ENCODE measurements at regions of chr19 and their contacts with region 1.

Region 1: DNA sequence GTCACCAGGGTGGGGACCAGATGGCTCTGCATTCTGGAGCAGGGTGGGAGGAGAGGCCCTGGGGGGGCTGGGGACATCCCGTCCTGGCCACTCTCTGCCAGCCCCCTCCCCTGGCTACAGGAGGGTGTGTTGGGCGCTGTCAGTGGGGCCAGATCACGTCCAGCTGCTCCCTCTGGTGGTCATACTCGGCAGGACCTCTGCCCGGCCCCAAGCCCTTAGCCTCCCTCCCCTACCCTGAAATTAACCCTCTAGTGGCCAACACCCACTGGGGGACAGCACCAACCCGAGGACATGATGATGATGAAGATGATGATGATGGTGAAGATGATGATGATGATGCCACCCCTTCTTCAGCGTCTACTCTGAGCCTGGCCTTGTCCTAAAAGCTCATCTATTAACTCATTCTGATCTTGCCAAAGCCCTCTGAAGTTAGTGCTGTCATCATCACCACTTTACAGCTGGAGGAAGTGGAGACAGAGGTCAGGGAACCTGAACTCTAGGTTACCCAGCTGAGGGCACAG is 590 bp upstream of the LGI4 start:
- DNase-seq: peak; percentile 77
- H3K4me3 Mint-ChIP-seq: no peak overlapping the region
- H3K27ac Mint-ChIP-seq: no peak overlapping the region
- H3K4me1 Mint-ChIP-seq: peaks cover 4% of the 10 kb centered on the region
- H3K27me3 Mint-ChIP-seq: peaks cover 27% of the 10 kb centered on the region

Region 2: DNA sequence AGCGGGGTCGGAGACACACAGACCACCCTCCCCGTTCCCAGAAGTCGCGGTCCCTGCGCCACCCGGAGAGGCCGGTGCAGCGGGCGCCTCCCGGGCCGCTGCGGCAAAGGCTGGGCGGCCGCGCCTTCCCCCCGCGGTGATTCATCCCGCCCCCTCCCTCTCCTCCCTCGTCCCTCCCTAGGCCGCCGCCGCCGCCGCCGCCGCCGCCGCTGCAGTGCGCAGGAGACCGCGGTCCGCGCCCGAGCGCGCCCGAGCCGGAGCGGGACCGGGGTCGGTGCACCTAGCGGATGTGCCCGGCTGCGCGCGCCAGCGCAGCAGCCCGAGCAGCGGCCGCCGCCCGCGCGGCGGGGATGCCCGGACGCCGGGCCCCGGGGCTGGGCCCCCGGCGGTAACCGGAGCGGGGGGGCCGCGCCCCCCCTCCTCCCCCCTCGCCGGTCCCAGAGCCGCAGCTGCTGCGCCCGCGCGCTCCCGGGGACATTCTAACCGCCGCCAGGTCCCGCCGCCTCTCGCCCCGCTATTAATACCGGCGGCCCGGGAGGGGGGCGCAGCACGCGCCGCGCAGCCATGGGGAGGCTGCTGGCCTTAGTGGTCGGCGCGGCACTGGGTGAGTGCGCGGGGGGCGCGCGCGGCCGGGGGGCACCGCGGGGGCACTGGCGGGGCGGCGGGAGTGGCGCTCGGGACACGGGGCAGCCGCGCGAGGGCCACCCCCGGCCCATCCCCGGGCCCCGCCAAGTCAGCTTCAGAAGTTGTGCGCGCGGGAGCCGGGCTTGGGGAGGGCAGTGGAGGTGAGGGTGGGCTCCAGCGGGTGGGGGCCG is 105.0 kb before region 1 on chr19 and contains the start of gene SCN1B:
- CTCF ChIA-PET with region 1: no interaction called
- DNase-seq: peak; percentile 71
- H3K4me3 Mint-ChIP-seq: peak within 1 kb of the TSS; percentile 66
- H3K27ac Mint-ChIP-seq: peak within 1 kb of the TSS; percentile 13
- H3K4me1 Mint-ChIP-seq: peaks cover 9% of the 10 kb centered on the region
- H3K27me3 Mint-ChIP-seq: peaks cover 56% of the 10 kb centered on the region

Region 3: DNA sequence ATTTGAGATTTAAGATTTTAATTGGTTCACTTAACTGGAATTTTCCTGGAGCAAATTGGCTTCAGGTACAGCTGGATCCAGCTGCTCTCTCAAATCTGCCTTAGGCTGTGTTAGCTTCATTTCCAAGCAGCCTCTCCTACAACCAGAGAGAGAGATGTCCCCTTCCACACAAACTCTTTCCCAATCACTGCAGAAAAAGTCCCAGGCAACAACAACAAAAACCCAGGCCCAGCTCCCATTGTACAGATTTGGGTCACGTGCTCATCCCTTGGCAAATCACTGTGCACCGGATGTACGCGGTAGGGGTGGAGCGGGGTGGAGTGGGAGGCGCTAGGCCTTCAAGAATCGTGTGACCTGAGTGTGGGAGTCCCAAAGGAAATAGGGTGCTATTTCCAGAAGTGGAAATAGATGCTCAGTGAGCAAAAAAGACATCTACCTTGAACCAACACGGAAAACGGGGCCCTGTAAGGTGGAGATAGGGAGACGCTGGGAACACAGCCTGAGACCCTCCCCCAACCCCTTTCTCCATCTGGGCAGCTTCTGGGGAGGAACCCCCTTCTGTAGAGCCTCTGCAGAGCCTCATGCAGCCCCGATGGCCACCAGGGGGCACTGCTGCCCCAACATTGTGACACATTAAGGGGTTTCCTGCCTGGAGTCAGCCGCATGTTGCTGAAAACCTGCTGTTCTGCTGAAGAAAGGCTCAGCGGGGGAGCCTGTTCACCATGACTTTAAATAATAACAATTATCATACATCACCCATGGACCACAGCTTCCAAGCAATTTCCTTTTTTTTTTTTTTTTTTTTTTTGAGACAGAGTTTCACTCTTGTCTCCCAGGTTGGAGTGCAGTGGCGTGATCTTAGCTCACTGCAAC is 68.5 kb before region 1 on chr19:
- CTCF ChIA-PET with region 1: interaction called, 39 read pairs
- DNase-seq: peak; percentile 92
- H3K4me3 Mint-ChIP-seq: no peak overlapping the region
- H3K27ac Mint-ChIP-seq: no peak overlapping the region
- H3K4me1 Mint-ChIP-seq: peaks cover 10% of the 10 kb centered on the region
- H3K27me3 Mint-ChIP-seq: peaks cover 9% of the 10 kb centered on the region

Region 4: DNA sequence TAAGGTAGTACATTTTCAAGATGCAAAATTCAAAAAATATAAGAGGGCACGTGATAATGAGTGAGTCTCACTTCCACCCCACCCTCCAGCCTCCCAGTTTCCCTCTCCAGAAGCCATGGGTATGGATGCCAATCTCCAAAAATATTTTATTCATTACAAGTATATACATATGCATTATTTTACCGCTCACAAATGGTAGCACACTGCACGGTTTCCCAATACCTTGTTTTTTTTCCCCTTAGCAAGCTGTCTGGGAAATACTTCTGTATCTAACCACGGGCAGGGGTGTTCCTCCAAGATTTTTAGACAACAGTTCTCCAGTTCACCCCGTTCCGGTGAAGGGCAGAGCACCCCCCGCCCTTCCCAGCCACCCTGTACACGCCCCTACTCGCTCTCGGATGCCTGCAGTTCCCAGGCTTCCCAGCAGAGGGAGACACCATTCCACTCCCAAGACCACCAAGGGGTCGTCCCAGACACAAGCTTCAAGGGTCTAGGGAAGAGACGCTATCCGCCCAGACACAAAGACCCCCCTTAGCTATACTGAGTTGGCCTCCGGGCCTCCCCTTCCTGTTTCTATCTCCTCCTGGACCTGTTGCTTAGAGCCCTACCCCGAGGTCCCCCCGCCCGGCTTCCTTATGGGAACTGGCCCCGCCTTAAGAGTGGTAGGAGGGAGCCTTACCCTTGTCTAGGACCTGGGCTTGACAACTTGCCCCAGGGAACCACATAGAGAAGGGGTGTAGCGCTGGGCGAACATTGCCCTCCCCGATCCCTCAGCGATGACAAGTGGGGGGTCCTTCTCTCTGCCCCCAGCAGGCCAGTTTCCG is 20.9 kb before region 1 on chr19:
- CTCF ChIA-PET with region 1: interaction called, 24 read pairs
- DNase-seq: peak; percentile 77
- H3K4me3 Mint-ChIP-seq: no peak overlapping the region
- H3K27ac Mint-ChIP-seq: peak overlapping the region; percentile 24
- H3K4me1 Mint-ChIP-seq: peaks cover 9% of the 10 kb centered on the region
- H3K27me3 Mint-ChIP-seq: peaks cover 31% of the 10 kb centered on the region

Region 5: DNA sequence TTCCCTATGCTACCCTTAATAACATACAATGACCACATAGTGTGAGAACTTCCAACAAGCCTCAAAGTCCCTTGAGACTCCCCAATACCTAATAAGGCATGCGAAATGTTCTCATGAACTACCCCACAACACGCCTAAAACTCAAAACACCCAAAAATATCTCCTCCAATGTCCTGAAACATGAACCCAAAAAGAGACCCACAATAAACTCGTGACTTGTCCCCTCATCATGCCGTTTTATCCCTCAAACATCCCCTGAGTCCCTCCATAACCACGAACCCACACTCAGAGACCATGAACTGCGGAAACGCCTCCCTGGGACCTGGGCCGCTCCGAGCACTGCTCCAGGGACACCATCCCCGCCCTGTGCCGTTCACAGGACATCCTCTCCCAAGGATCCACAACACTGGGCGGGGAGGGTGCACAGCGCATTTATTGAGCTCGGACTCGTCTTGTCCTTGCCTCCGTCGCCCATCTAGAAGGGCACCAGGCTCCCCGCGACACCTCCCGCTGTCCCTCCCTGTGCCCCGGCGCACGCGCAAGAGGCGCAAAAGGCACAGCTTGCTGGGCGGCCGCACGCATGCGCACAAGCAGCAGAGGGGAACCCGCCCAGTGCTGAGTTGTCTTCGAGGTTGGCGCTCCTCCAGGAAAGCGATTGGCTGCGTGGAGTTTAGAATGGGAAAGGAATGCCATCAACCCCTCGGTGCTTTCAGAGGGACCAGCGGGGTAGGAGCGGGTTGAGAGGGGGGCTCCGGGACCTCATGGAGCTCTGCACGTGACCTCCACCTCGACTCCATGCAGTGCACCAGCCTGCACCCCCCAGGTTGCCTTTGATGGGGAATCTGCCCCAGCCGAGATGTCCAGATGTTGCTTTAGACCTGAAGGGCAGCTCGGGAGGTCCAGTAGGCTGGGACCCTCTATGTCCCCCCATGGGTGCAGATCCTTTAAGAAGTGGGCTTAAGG is 11.1 kb before region 1 on chr19:
- CTCF ChIA-PET with region 1: interaction called, 11 read pairs
- DNase-seq: peak; percentile 91
- H3K4me3 Mint-ChIP-seq: peak overlapping the region; percentile 70
- H3K27ac Mint-ChIP-seq: peak overlapping the region; percentile 75
- H3K4me1 Mint-ChIP-seq: peaks cover 16% of the 10 kb centered on the region
- H3K27me3 Mint-ChIP-seq: peaks cover 45% of the 10 kb centered on the region

Region 6: DNA sequence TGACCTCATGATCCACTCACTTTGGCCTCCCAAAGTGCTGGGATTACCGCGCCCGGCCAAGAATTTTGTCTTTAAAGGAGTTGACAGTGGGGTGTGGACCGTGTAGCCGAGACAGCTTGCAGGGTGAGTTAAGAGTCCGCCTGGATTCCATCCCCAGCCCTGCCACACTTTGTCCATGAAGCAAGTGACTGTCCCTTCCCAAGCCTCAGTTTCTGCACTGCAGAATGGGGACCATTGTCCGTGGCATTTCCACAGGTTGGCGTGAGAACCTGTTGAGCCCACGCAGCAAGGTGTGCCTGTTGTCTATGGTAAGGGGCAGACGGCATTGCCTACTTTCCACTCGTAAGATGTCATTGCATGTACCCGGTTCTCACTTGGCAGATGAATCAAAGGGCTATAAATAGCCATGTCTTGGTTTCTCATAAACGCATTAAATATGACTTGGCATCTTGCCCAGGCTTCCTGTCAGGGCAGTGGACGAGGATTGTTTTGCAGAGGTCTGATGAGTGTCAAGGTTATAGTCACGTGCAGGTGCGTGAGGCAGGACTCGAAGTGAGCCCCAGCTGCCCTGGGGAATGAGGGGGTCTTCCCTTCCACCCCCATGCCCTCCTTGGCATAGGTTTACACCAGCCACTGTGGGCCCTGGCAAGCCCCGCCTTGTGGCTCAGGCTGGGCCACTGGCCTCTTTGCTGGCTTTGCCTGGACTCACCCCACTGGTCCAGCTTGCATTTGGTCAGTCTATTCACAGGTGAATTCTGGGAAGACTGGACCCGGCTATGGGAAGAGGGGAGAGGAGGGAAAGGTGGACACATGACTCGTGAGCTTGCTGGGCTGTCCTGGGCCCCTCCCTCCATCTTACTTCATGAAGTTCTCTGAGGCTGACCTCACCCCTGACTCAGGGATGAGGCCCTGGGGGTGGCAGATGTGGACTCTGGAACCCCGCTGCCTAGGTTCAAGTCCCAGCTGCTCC is 78.5 kb after region 1 on chr19:
- CTCF ChIA-PET with region 1: interaction called, 18 read pairs
- DNase-seq: peak; percentile 81
- H3K4me3 Mint-ChIP-seq: peak overlapping the region; percentile 15
- H3K27ac Mint-ChIP-seq: peak overlapping the region; percentile 100
- H3K4me1 Mint-ChIP-seq: peaks cover 84% of the 10 kb centered on the region
- H3K27me3 Mint-ChIP-seq: no peaks in the 10 kb centered on the region

Region 7: DNA sequence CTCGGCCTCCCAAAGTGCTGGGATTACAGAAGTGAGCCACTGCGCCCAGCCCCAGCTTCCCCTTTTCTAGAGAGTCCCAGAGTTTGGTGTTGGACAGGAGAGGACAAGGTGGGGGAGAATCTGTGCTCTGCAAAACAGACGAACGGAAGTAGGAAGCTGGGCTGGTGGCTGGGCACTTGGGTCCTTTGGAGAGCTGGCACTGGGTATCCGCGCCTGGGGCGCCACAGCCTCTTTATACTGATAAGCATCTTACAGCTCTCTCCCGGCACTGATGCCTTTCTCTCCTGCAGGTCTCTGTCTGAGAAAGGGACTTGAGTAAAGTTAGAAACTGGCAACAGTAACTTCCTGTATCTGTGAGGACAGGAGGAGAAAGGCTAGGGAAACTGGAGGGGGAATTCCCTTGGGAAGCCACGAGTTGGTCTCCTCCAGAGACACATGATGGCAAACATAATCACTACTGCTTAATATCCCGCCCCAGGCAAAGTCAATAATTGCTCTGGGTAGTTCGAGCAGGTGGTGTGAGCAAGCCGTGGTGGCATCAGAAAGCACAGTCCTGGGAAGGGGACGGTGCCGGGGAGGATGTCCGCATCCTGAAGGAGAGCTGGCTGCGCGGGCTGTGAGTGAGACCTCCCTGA is 313.7 kb after region 1 on chr19:
- CTCF ChIA-PET with region 1: no interaction called
- DNase-seq: no peak
- H3K4me3 Mint-ChIP-seq: no peak overlapping the region
- H3K27ac Mint-ChIP-seq: no peak overlapping the region
- H3K4me1 Mint-ChIP-seq: peaks cover 58% of the 10 kb centered on the region
- H3K27me3 Mint-ChIP-seq: peaks cover 84% of the 10 kb centered on the region

Measured in activated naive CD4-positive, alpha-beta T cell treated with anti-CD3 and anti-CD28 coated beads, Interleukin-2, amount 10 ng/mL, durations not matched to agents 7 days and 5 days (primary cell).